ENCODE measurements at regions of chr1 and their contacts with region 1.

Region 1: DNA sequence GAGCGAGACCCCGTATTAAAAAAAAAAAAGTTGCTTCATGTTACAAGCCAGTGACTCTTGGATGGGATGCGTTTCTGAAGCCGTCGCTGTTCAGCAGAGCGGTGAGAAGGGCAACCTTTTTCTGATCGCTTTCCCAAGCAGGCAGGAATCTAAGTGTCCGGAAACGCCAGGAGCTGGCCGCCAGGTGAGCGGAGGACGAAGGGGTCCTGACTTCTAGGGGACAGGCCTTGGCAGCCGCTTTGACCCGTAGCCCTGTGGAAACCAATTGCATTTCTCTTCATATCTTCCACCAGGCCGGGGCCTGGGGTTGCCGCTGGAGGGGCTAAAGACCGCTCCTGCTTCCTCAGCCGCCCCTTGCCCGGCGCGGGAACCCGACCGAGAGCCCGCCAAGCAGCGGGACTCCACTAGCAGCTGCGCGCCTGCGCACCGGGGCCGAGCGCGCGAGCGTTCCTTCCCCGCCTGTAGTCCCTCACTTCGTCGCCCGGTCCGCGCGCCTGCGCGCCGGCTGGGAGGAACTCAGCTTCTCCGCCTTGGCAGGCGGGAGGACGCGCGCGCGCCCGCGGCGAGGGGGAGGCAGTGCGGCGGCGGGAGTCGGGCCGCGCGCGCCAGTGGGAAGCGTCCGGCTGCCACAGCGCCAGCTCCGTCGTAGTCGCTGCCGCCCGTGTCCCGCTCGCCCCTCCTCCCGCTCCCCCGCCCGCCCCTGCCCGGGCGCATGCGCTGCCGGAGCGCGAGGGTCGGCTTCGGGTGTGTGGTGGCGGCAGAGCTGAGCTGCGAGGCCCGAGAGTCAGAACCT is at the start of gene SPEN:
- DNase-seq: peak; percentile 94 to 98
- ATAC-seq: peak; percentile 69 to 72
- H3K4me3 ChIP-seq: peak within 1 kb of the TSS; percentile 79 to 88 (median 87)
- H3K27ac ChIP-seq: peak within 1 kb of the TSS; percentile 90 to 99 (median 98)
- H3K4me1 ChIP-seq: peaks cover 43 to 52% of the 10 kb centered on the region in 2 donors
- H3K27me3 ChIP-seq: no peaks in the 10 kb centered on the region
- CTCF ChIP-seq: peak; percentile 7 to 26 (median 18)
- POLR2A ChIP-seq: peak; percentile 73 to 90
- total RNA-seq, gene SPEN: 21.7 to 55.5 (median 38.0) TPM

Region 2: DNA sequence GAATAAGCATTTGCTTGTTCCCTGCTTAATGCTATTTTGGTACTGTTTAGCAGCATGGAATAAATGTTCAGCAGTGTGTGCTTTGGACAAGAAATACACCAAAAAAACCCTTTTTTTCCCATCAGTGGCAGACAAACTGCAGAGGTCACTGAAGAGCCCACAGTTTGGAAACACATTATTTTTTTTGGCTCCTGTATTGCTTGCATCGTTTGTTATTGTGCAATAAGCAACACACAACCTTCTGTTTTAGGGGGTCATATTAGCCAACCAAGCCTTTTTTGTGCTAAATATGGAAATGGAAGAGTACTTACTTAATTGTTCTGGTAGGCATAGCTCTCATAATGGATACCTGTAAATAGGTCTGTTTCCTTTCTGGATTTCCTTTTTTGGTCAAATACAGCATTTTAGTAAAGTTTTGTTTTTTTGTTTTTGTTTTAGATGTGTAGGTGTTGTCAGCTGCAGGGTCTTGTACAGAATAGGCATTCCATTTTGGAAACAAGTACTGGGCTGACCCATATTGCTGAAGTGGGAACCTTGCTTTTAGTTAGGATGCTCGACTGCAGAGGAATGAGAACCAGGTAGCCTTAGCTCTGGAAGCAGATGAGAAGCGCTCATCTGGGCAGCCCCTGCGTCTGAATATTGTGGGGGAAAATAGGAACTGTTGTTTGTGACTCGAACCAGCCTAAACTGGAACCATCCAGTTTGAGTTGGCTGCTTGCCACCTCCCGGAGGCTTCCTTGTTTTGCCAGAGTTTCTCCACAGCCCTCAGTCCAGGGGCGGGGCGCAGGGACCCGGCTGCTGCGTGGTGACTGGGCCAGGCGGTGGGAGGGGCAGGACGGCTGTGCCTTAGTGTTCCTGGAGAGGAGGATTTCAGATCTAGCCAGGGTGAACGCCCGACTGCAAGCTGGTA is 38.7 kb after region 1 on chr1:
- in situ Hi-C with region 1: loop called in 1 of 4 experiments (anchors 5 kb)
- intact Hi-C with region 1: loop called (anchors 2 kb)
- DNase-seq: peak; percentile 93 to 96
- ATAC-seq: peak; percentile 92
- H3K4me3 ChIP-seq: peak overlapping the region; percentile 46 to 48 (median 48)
- H3K27ac ChIP-seq: peak overlapping the region; percentile 81 to 95 (median 90)
- H3K4me1 ChIP-seq: peaks cover 58 to 64% of the 10 kb centered on the region in 2 donors
- H3K27me3 ChIP-seq: no peaks in the 10 kb centered on the region
- CTCF ChIP-seq: no peak
- POLR2A ChIP-seq: peak; percentile 60 to 74

Measured in gastrocnemius medialis (tissue), 4 donors.